Activated CD8-positive, alpha-beta T cell treated with anti-CD3 and anti-CD28 coated beads for 36 hours (primary cell): ENCODE measurements at regions of chr2 and their contacts with region 1.

Region 1: GRCh38 chr2:168166902-168167510 is 80.4 kb downstream of the STK39 start:
- DNase-seq: peak; percentile 64
- ATAC-seq: peak; percentile 87
- H3K4me3 Mint-ChIP-seq: no peak overlapping the region
- H3K27ac Mint-ChIP-seq: peak overlapping the region; percentile 78
- H3K4me1 Mint-ChIP-seq: peaks cover 63% of the 10 kb centered on the region
- H3K27me3 Mint-ChIP-seq: no peaks in the 10 kb centered on the region
- CTCF ChIP-seq: no peak

Region 2: DNA sequence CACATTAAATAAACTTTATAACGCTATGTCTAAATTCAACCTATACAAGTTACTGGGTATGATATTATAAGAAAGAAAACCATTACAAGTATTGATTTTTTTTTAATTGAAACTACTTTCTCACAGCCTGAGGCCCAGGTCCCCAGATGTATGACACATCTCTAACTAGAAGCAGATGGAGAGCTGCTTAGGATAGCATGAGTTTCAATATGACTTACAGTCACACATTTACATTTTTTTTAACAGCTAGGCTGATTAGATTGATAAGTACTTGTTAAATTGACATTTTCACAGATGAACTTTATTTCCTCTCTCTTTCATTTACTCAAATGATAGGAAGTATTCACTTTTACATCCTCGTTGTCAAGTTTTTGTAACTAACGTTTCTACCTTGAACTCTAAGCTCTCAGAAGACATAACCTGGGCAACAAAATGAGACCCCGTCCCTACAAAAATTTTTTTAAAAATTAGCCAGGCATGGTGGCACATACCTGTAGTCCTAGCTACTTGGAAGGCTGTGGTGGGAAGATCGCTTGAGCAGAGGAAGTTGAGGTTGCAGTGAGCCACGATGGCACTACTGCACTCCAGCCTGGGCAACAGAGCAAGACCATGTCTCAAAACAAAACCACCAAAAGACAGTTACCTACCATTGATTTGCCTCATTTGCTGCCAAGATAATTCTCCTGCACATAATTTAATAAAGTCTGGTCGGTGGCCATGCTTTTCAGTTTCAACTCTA is 27.9 kb after region 1 on chr2:
- CTCF ChIA-PET with region 1: interaction called, 5 read pairs
- POLR2A ChIA-PET with region 1: interaction called, 3 read pairs
- intact Hi-C with region 1: loop called (anchors 2 kb)
- DNase-seq: peak; percentile 63
- ATAC-seq: peak; percentile 81
- H3K4me3 Mint-ChIP-seq: peak overlapping the region; percentile 69
- H3K27ac Mint-ChIP-seq: peak overlapping the region; percentile 98
- H3K4me1 Mint-ChIP-seq: peaks cover 71% of the 10 kb centered on the region
- H3K27me3 Mint-ChIP-seq: no peaks in the 10 kb centered on the region
- CTCF ChIP-seq: no peak